ENCODE measurements at regions of chr15 and their contacts with region 1.

Region 1: DNA sequence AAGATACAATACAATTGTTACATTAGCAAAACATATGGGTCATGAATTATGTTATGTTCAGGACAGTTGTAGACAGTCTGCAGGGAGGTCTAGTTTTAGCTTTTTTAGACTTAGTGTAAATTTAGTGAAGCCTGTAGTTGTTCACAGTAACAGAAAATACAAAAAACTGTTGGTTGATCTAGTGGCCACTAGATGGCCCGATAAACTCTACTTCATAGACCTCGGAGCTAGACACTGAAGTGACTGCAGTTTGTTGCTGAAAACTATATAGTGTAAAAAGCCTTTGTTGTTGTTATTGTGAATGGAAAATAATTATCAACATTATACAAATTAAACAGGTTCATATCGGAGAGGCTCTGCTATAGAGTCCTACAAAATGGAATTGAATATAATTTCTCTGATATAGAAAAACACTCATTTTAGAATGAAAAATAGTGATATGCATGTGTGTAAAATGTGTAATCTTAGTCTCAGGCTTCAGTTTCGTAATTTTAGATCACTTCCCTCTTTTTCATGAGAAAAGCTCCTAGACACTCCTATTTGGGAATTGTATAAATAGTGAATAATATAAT is 18.3 kb downstream of the MAGEL2 start:
- DNase-seq: no peak
- H3K4me3 Mint-ChIP-seq: no peak overlapping the region
- H3K27ac Mint-ChIP-seq: no peak overlapping the region
- H3K4me1 Mint-ChIP-seq: no peaks in the 10 kb centered on the region
- H3K27me3 Mint-ChIP-seq: no peaks in the 10 kb centered on the region
- CTCF ChIP-seq: peak; percentile 42

Region 2: DNA sequence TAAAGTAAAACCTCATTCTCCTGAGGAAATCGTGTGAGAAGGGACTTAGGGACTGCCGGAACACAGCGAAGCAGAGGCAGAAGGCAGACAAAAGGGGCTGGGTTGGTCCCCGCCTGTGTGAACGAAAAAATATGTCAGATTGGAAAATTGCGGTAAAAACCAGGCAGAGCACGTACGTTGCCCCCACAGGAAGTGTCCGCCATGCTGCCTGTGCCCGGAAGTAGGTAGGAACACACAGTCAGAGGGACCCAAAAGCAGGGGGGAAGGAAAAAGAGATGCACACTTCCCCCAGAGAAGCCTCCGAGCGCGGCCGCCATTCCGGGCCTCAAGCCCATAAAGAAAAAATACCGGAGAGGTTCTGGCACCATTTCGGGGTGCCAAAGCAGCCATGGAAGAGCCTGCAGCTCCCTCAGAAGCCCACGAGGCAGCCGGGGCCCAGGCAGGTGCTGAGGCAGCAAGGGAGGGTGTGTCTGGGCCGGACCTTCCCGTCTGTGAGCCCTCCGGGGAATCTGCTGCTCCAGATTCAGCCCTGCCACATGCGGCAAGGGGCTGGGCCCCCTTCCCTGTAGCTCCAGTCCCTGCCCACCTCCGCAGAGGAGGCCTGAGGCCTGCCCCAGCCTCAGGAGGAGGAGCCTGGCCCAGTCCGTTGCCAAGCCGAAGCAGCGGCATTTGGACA is 63.8 kb before region 1 on chr15 and contains the start of gene MKRN3:
- CTCF ChIA-PET with region 1: no interaction called
- POLR2A ChIA-PET with region 1: no interaction called
- intact Hi-C with region 1: no loop called
- DNase-seq: no peak
- H3K4me3 Mint-ChIP-seq: no peak within 1 kb of the TSS
- H3K27ac Mint-ChIP-seq: no peak within 1 kb of the TSS
- H3K4me1 Mint-ChIP-seq: no peaks in the 10 kb centered on the region
- H3K27me3 Mint-ChIP-seq: no peaks in the 10 kb centered on the region
- CTCF ChIP-seq: no peak
- total RNA-seq, gene MKRN3: not detected in 2 replicates

Region 3: GRCh38 chr15:23616536-23616935 is 12.8 kb before region 1 on chr15:
- CTCF ChIA-PET with region 1: interaction called, 16 read pairs
- POLR2A ChIA-PET with region 1: no interaction called
- intact Hi-C with region 1: no loop called
- DNase-seq: no peak
- H3K4me3 Mint-ChIP-seq: no peak overlapping the region
- H3K27ac Mint-ChIP-seq: no peak overlapping the region
- H3K4me1 Mint-ChIP-seq: no peaks in the 10 kb centered on the region
- H3K27me3 Mint-ChIP-seq: no peaks in the 10 kb centered on the region
- CTCF ChIP-seq: no peak

Measured in MCF 10A (cell line).